Mammary epithelial cell (primary cell): ENCODE measurements at regions of chr4 and their contacts with region 1.

Region 1: DNA sequence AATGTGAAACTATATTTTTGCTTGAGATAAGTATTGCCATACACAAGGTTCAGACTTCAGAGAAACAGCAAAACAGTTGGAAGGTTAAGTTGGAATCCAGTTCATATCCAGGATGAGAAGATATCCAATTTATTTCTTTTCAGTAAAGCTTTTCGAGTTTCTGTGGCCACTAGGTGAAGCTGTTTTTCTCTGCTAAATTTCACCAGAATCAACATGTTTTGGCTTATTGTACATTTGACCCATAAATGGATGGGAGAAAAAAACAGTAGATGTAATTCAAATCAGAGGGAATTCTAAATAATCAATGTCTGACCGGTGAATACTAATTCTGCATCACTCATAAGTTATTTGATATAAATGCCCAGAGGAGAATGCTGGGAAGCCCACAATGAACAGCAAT is 9.1 kb upstream of the METTL14 start:
- DNase-seq: no peak
- H3K4me3 ChIP-seq: no peak overlapping the region
- H3K27ac ChIP-seq: no peak overlapping the region
- H3K4me1 ChIP-seq: no peaks in the 10 kb centered on the region
- H3K27me3 ChIP-seq: no peaks in the 10 kb centered on the region
- CTCF ChIP-seq: no peak

Region 2: GRCh38 chr4:117623326-117623725 is 1052.8 kb before region 1 on chr4:
- CTCF ChIA-PET with region 1: no interaction called
- dilution Hi-C with region 1: no loop called
- in situ Hi-C with region 1: no loop called
- intact Hi-C with region 1: no loop called
- DNase-seq: no peak
- H3K4me3 ChIP-seq: no peak overlapping the region
- H3K27ac ChIP-seq: no peak overlapping the region
- H3K4me1 ChIP-seq: no peaks in the 10 kb centered on the region
- H3K27me3 ChIP-seq: peaks cover 2% of the 10 kb centered on the region
- CTCF ChIP-seq: no peak

Region 3: DNA sequence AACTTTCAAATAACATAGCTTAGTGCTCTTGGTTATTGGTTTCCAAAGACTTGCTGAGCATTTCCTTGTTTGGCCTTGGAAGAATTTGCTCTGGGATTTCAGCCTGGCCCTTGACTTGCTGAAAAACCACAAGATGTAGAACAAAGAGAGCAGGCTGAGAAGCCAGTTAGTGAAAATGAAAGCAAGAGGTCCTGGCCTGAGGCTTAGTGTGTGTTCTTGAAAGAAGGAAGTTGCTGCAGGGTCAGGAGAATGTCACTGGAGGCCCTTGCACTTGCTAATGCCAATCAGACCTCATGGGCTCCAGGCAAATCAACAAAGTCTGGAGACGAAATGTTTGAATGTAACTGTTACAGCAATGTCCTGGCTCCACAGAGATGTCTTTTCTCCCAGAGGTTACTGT is 291.9 kb after region 1 on chr4:
- CTCF ChIA-PET with region 1: no interaction called
- dilution Hi-C with region 1: no loop called
- in situ Hi-C with region 1: no loop called
- intact Hi-C with region 1: loop called (anchors 5 kb)
- DNase-seq: peak; percentile 48
- H3K4me3 ChIP-seq: no peak overlapping the region
- H3K27ac ChIP-seq: no peak overlapping the region
- H3K4me1 ChIP-seq: peaks cover 20% of the 10 kb centered on the region
- H3K27me3 ChIP-seq: no peaks in the 10 kb centered on the region
- CTCF ChIP-seq: no peak